Activated naive CD4-positive, alpha-beta T cell treated with anti-CD3 and anti-CD28 coated beads, Interleukin-2, amount 10 ng/mL, durations not matched to agents 7 days and 5 days (primary cell): ENCODE measurements at regions of chr21 and their contacts with region 1.

Region 1: DNA sequence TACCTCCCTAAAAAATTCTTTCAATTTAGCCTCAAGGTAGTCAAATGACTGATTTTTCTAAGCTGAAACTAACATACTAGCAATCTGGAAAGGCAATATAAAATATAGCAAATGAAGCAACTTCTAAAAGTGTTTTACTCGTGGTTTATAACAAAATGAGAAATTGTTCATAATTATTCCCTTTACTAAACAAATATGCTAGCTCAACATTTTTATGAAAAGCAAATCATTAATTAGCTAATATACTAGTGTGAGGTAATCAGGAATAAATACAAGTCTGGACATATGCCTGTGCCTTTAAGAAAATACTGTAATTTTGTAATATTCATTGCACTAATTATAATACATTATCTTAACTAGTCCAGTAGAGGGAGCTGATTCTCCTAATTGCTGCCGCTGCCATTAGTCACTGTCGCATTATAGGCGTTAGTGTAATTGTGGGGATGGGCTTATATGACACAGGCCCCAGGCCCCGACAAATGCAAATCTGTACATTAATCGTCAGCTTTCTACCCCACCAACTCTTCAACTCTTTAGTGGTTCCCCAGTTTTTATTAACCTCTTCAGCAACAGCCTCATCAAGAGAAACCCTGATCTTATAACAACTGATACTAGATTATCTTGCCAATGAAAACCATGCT is 160.9 kb downstream of the GABPA start:
- DNase-seq: peak; percentile 28
- H3K4me3 Mint-ChIP-seq: no peak overlapping the region
- H3K27ac Mint-ChIP-seq: no peak overlapping the region
- H3K4me1 Mint-ChIP-seq: peaks cover 14% of the 10 kb centered on the region
- H3K27me3 Mint-ChIP-seq: no peaks in the 10 kb centered on the region

Region 2: DNA sequence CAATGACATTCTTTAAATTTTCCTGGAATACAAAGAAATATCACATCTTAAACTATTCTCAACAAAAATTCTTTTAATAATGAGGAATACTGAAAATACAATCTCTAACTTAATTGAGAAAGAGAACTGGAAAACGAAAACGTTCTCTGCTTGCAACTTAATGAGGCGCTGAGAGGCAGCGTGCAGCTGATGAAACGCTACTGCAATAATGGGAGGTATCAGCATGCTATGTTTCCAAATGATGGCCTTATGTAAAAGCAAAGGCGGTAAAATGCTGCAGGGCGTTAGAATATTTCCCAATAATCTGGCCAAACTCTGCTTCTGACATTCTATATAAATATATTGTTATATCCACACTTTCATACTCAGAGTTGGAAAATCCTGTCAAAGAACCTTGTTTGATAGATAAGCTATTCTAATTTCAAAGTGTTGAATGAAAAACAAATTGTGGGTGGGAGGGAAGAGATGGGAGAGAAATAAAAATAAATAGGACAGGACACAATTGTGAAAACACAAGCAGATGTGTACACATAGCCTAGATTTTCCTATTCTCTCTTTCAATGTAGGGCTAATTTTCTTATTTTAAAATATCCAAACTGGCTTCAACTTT is 204.0 kb after region 1 on chr21:
- CTCF ChIA-PET with region 1: no interaction called
- DNase-seq: no peak
- H3K4me3 Mint-ChIP-seq: no peak overlapping the region
- H3K27ac Mint-ChIP-seq: no peak overlapping the region
- H3K4me1 Mint-ChIP-seq: no peaks in the 10 kb centered on the region
- H3K27me3 Mint-ChIP-seq: no peaks in the 10 kb centered on the region

Region 3: DNA sequence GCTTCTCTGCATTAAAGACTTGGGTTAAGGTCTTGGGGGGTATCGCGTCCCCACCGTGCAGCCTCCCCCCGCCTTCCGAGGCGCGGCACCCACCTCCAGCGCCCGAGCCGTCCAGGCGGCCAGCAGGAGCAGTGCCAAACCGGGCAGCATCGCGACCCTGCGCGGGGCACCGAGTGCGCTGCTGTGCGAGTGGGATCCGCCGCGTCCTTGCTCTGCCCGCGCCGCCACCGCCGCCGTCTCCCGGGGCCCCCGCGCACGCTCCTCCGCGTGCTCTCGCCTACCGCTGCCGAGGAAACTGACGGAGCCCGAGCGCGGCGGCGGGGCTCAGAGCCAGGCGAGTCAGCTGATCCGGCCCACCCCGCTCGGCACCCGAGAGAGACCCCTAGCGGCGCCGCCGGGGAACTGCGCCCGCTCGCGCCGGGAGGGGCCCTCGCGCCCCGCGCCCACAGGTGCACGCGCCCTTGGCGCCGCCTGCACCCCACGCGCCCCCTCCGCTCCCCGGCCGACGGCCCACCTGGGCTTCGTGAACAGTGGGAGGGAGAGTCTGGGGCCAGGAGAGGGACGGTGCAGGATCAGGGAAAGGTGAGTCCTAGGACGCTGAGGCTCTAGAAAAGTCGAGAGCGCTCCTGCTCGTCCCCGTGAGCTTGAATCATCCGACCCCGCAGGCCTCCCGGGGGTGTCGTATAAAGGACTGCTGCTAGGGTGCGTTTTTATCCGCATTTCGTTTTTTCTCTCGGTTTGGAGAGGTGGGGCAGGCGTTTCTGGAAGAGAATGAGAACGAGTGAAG is 275.0 kb after region 1 on chr21 and contains the start of gene APP:
- CTCF ChIA-PET with region 1: interaction called, 36 read pairs
- DNase-seq: peak; percentile 88
- H3K4me3 Mint-ChIP-seq: peak within 1 kb of the TSS; percentile 83
- H3K27ac Mint-ChIP-seq: peak within 1 kb of the TSS; percentile 55
- H3K4me1 Mint-ChIP-seq: peaks cover 14% of the 10 kb centered on the region
- H3K27me3 Mint-ChIP-seq: peaks cover 5% of the 10 kb centered on the region